ENCODE measurements at regions of chr10 and their contacts with region 1.

Region 1: DNA sequence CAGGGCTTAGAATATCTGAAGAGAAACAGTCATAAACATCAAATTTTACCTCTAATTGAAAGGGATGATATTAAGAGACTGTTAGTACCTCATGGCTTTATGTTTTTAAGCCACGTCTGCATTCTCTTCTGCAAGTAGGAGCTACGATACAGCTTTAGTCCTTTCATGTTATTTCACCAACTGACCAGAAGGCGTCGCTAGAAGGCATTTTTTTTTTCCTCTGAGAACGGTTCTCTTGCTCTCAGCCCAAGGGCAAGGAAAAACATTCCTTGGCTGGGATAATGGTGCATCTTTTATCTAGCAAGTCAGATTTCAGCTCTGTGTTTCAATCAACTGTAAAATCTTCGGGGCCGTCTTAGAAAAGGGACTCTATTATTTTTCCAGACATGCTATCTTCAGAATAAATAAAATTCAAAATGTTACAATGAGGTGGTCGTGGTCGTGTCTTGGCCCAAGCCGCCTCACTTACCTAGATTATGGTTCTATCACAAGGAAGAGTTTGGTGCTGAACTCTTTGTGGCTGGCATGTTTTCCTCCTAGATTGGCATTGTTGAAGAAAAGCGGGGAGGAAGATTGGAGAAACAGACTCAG is 41.6 kb upstream of the LYZL2 start:
- DNase-seq: peak; percentile 53
- ATAC-seq: peak; percentile 80
- H3K4me3 Mint-ChIP-seq: peak overlapping the region; percentile 44
- H3K27ac Mint-ChIP-seq: no peak overlapping the region
- H3K4me1 Mint-ChIP-seq: peaks cover 5% of the 10 kb centered on the region
- H3K27me3 Mint-ChIP-seq: peaks cover 12% of the 10 kb centered on the region

Region 2: DNA sequence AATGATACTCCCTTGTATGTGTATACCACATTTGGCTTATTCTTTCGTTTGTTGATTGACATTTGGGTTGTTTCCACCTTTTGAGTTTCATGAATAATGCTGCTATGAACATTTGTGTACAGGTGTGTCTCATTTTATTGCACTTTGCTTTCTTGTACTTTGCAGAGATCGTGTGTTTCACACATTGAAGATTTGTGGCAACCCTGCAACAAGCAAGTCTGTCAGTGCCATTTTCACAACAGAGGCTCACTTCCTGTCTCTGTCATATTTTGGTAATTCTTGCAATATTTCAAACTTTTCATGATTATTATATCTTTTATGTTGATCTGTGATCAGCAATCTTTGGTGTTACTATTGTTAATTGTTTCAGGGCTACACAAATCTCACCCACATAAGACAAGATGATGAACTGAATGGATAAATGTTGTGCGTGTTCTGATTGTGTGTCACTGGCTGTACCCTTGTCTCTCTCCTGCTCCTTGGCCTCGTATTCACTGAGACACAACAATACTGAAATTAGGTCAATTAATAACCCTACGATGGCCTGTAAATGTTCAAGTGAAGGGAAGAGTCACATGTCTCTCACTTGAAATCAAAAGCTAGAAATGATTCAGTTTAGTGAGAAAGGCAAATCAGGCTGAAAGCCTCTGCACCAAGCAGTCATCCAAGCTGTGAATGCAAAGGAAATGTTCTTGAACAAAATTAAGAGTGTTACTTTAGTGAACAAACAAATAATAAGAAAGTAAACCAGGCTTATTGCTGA is 478.1 kb before region 1 on chr10:
- CTCF ChIA-PET with region 1: no interaction called
- POLR2A ChIA-PET with region 1: no interaction called
- DNase-seq: no peak
- ATAC-seq: no peak
- H3K4me3 Mint-ChIP-seq: no peak overlapping the region
- H3K27ac Mint-ChIP-seq: no peak overlapping the region
- H3K4me1 Mint-ChIP-seq: no peaks in the 10 kb centered on the region
- H3K27me3 Mint-ChIP-seq: peaks cover 24% of the 10 kb centered on the region

Region 3: DNA sequence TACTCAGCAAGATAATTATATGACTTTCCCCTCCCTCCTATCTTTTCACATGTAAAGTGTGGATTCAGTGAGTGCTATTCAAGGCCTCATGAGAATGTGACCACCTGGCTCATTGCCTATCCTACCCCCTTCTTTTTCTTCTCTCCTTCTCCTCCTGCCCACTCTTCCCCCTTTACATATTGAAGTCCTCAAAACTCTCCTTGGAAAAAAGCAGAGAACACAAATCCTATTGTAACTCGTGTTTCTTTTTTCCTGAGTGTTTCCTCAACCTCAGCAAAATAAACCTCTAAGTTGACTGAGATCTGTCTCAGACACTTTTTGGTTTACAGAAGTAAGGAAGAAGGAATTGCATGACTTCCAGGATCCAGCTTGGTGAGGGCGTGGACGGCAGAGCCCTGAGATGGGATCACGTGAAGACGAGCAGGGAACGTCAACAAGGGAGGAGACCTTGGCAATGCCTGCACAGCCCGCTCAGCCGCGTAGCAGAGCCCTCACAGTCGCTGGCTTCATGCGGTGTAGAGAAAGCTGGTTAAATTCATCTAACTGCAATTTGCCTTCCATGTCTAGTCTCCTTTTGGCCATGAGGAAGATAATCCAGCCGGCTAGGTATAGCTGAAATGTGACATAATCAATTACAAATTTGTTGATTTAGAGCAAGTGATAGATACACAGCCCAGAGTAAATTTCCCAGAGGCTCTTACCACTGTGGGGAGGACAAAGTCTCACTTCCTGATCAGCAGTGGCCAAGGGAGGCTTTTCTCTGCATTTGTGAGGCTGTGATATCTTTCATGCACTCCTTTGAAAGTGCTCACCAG is 117.3 kb before region 1 on chr10:
- CTCF ChIA-PET with region 1: no interaction called
- POLR2A ChIA-PET with region 1: no interaction called
- DNase-seq: no peak
- ATAC-seq: no peak
- H3K4me3 Mint-ChIP-seq: no peak overlapping the region
- H3K27ac Mint-ChIP-seq: no peak overlapping the region
- H3K4me1 Mint-ChIP-seq: peaks cover 19% of the 10 kb centered on the region
- H3K27me3 Mint-ChIP-seq: peaks cover 5% of the 10 kb centered on the region

Region 4: GRCh38 chr10:30722956-30723620 is 52.0 kb after region 1 on chr10:
- CTCF ChIA-PET with region 1: interaction called, 25 read pairs
- POLR2A ChIA-PET with region 1: no interaction called
- DNase-seq: no peak
- ATAC-seq: no peak
- H3K4me3 Mint-ChIP-seq: no peak overlapping the region
- H3K27ac Mint-ChIP-seq: no peak overlapping the region
- H3K4me1 Mint-ChIP-seq: peaks cover 8% of the 10 kb centered on the region
- H3K27me3 Mint-ChIP-seq: peaks cover 9% of the 10 kb centered on the region

Measured in activated CD8-positive, alpha-beta T cell treated with anti-CD3 and anti-CD28 coated beads, Interleukin-2, amount 10 ng/mL, durations not matched to agents 7 days and 5 days (primary cell).